ENCODE measurements at regions of chr7 and their contacts with region 1.

Region 1: GRCh38 chr7:22103255-22103969 is 157.7 kb upstream of the CDCA7L start:
- DNase-seq: peak; percentile 57 to 68
- H3K4me3 ChIP-seq: no peak overlapping the region
- H3K27ac ChIP-seq: no peak overlapping the region
- H3K4me1 ChIP-seq: no peaks in the 10 kb centered on the region
- H3K27me3 ChIP-seq: peaks cover 43% of the 10 kb centered on the region
- CTCF ChIP-seq: peak; percentile 88

Region 2: GRCh38 chr7:21806388-21806787 is 297.0 kb before region 1 on chr7:
- CTCF ChIA-PET with region 1: no interaction called
- POLR2A ChIA-PET with region 1: no interaction called
- intact Hi-C with region 1: no loop called
- DNase-seq: no peak
- H3K4me3 ChIP-seq: no peak overlapping the region
- H3K27ac ChIP-seq: no peak overlapping the region
- H3K4me1 ChIP-seq: no peaks in the 10 kb centered on the region
- H3K27me3 ChIP-seq: peaks cover 68% of the 10 kb centered on the region
- CTCF ChIP-seq: no peak

Region 3: DNA sequence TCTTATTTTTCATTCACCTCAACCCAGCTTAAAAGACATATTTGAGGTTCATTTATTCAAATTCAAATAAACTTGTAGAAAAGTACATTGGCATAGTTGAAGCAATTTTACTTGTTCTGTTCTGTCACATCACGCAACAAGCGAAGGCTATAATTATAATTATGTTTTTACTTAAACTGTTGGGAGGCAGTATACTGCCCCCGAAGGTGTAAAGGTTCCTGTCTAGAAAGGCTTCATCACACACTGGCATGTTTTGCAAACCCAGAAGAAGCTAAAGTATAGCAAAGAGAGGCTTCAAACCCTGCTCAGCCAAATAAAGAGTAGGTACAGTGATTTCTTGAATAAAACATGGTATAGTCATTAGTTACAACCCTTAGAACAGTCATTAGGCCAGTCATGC is 220.3 kb before region 1 on chr7:
- CTCF ChIA-PET with region 1: no interaction called
- POLR2A ChIA-PET with region 1: no interaction called
- intact Hi-C with region 1: no loop called
- DNase-seq: no peak
- H3K4me3 ChIP-seq: no peak overlapping the region
- H3K27ac ChIP-seq: no peak overlapping the region
- H3K4me1 ChIP-seq: no peaks in the 10 kb centered on the region
- H3K27me3 ChIP-seq: no peaks in the 10 kb centered on the region
- CTCF ChIP-seq: no peak

Region 4: DNA sequence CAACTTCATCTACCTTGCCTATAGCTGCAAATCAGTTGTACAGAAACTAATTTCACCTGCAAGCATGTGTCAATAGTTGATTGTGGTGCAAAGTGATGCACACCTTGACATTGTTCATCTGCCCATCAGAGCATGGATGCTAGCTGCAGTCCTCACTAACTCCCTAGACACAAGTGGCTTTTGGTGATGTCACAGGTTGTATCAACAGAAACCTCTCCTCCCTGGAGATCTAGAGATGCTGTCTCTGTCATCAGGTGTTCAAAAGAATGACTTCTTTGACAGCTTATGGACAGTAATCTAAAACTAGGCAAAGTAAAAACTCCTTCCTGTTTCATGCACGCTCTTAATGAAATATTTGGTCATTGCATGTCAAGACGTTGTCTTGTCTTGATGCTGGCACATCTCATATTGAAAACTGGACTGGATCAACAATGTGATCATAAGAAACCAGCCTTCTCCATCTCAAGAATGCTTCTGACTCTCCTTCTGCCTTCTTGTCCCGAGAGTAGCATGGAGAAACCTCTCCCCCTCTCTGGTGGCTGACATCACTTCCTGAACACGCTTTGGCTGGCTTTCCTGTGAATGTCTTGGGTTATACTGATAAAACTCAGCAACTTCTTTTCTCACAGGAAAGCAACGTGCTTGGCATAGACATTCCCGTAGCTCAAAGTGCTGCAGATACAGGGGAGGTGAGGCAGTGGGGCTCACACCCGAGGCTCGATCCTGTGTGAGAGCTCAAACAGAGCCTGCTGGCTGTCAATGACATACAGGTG is 18.5 kb after region 1 on chr7:
- CTCF ChIA-PET with region 1: no interaction called
- POLR2A ChIA-PET with region 1: no interaction called
- intact Hi-C with region 1: no loop called
- DNase-seq: no peak
- H3K4me3 ChIP-seq: no peak overlapping the region
- H3K27ac ChIP-seq: no peak overlapping the region
- H3K4me1 ChIP-seq: no peaks in the 10 kb centered on the region
- H3K27me3 ChIP-seq: no peaks in the 10 kb centered on the region
- CTCF ChIP-seq: no peak

Region 5: GRCh38 chr7:22361795-22362194 is 258.4 kb after region 1 on chr7:
- CTCF ChIA-PET with region 1: no interaction called
- POLR2A ChIA-PET with region 1: no interaction called
- intact Hi-C with region 1: no loop called
- DNase-seq: peak; percentile 57 to 64
- H3K4me3 ChIP-seq: no peak overlapping the region
- H3K27ac ChIP-seq: no peak overlapping the region
- H3K4me1 ChIP-seq: peaks cover 18% of the 10 kb centered on the region
- H3K27me3 ChIP-seq: no peaks in the 10 kb centered on the region
- CTCF ChIP-seq: no peak

Region 6: GRCh38 chr7:22499044-22499443 is 395.6 kb after region 1 on chr7:
- CTCF ChIA-PET with region 1: no interaction called
- POLR2A ChIA-PET with region 1: no interaction called
- intact Hi-C with region 1: loop called (anchors 1 kb)
- DNase-seq: no peak
- H3K4me3 ChIP-seq: no peak overlapping the region
- H3K27ac ChIP-seq: no peak overlapping the region
- H3K4me1 ChIP-seq: peaks cover 23% of the 10 kb centered on the region
- H3K27me3 ChIP-seq: no peaks in the 10 kb centered on the region
- CTCF ChIP-seq: no peak

Region 7: GRCh38 chr7:23072048-23072447 is 968.6 kb after region 1 on chr7:
- CTCF ChIA-PET with region 1: no interaction called
- POLR2A ChIA-PET with region 1: no interaction called
- intact Hi-C with region 1: loop called (anchors 5 kb)
- DNase-seq: no peak
- H3K4me3 ChIP-seq: no peak overlapping the region
- H3K27ac ChIP-seq: no peak overlapping the region
- H3K4me1 ChIP-seq: peaks cover 30% of the 10 kb centered on the region
- H3K27me3 ChIP-seq: no peaks in the 10 kb centered on the region
- CTCF ChIP-seq: no peak; the same call in 1 of the 2 replicates